RWPE1 (cell line): ENCODE measurements at regions of chr10 and their contacts with region 1.

Region 1: GRCh38 chr10:97748116-97748515 is 11.2 kb downstream of the ZFYVE27 start:
- DNase-seq: no peak
- H3K27ac ChIP-seq: no peak overlapping the region
- CTCF ChIP-seq: no peak

Region 2: GRCh38 chr10:97759158-97759887 is 11.2 kb after region 1 on chr10:
- CTCF ChIA-PET with region 1: interaction called, 12 read pairs
- POLR2A ChIA-PET with region 1: no interaction called
- DNase-seq: peak; percentile 74
- H3K27ac ChIP-seq: peak overlapping the region; percentile 16; the same call in 1 of the 2 replicates
- CTCF ChIP-seq: peak; percentile 86

Region 3: DNA sequence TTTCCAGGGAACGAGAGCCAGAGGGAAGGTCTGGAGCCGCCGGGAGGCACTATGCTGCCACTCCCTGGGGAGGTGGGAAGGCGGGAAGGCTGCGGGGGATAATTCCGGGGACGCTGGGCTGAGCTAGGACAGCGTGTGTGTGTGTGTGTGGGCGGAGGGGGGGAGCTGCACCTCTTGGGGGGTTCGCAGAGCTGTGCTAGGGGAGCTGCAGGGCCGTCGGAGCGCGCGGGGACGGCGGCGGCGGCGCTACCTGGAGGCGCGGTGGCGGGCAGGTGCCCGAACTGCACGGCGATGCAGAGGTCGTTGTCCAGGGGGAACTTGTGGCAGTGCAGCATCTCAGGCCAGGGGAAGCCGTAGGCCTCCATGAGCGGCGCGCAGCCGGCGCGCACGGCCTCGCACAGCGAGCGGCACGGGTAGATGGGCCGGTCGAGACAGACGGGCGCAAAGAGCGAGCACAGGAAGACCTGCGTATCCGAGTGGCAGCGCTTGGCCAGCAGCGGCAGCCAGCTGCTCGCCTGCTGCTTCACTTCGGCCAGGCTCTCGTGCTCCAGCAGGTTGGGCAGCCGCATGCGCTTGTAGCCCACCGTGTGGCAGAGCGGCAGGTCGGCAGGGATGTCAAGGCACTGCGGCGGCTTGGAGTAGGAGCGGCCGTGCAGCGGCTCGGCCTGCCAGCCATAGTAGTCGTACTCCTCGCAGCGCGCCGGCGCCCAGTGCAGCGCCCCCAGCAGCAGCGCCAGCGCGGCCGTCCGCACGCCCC is 23.1 kb after region 1 on chr10:
- CTCF ChIA-PET with region 1: no interaction called
- POLR2A ChIA-PET with region 1: no interaction called
- DNase-seq: peak; percentile 50
- H3K27ac ChIP-seq: no peak overlapping the region
- CTCF ChIP-seq: no peak